Left ventricle myocardium inferior (tissue), 1 donor: ENCODE measurements at regions of chr10 and their contacts with region 1.

Region 1: DNA sequence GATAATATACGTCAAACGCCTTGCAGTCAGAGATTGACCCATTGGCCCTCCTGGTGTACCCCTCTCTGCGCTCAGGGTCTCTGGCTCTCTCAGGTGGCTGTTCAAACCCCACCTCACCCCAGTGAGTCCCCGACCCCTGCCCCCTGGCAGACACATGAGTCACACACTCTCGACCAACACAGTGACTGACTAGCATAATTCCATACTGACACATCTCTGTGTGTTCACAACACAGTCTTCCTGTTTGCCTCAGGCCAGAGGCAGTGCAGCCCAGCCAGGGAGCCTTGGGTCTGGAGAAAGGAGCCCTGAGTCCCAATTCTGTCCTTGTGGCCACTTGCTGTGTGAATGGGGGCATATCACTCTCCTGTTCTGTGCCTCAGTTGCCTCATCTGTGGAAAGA is 40.1 kb downstream of the PALD1 start:
- DNase-seq: no peak
- H3K4me3 ChIP-seq: no peak overlapping the region
- H3K27ac ChIP-seq: no peak overlapping the region
- H3K4me1 ChIP-seq: peaks cover 35% of the 10 kb centered on the region
- H3K27me3 ChIP-seq: no peaks in the 10 kb centered on the region
- CTCF ChIP-seq: no peak

Region 2: DNA sequence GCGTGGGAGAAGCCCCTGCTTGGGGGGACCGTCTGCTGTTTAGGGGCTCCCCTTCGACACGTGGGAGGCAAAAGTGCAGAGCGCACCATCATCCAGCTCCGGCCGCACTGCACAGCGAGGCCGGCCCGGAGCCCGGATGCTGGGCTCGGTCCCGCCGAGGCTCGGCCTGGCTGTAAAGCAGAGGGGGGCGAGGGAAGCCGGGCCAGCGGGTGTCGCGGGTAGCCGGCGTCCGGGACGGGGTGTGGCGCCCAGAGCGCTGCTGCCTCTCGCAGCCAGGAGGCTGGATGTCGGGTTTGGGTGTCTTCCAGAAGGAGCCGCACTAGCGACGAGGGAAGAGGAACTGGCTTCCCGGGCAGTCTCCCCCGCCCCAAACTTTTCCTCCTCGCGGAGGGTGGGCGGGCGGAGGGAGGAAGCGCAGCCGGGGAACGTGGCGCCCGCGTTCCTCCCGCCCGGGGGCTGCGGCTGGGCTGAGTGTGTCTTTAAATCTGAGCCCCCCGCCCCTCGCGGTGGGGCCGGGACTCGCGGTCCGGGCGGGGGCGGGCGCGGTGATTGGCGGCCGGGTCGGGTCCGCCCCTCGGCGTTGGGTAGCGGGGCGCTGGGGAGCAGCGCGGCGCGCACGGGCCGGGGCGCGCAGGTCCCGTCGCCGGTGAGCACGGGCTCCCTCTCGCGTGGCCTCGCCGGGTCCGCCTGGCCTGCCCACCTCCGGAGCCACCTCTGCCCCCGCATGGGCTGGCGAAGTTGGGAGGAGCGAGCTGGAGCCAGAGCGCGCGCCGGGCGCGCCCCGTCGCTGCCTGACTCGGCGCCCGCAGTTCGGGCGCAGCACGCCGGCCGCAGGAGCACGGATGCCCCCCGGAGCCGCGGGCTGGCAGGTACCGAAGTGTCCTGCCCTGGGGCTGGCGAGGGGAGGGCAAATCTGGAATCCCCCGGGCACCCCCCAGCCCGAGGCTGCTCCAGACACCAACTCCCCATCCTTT is 40.2 kb before region 1 on chr10 and contains the start of gene PALD1:
- intact Hi-C with region 1: loop called (anchors 5 kb)
- DNase-seq: peak; percentile 83
- H3K4me3 ChIP-seq: peak within 1 kb of the TSS; percentile 77
- H3K27ac ChIP-seq: peak within 1 kb of the TSS; percentile 88
- H3K4me1 ChIP-seq: peaks cover 76% of the 10 kb centered on the region
- H3K27me3 ChIP-seq: no peaks in the 10 kb centered on the region
- CTCF ChIP-seq: peak; percentile 72
- total RNA-seq, gene PALD1: 5.1 TPM

Region 3: DNA sequence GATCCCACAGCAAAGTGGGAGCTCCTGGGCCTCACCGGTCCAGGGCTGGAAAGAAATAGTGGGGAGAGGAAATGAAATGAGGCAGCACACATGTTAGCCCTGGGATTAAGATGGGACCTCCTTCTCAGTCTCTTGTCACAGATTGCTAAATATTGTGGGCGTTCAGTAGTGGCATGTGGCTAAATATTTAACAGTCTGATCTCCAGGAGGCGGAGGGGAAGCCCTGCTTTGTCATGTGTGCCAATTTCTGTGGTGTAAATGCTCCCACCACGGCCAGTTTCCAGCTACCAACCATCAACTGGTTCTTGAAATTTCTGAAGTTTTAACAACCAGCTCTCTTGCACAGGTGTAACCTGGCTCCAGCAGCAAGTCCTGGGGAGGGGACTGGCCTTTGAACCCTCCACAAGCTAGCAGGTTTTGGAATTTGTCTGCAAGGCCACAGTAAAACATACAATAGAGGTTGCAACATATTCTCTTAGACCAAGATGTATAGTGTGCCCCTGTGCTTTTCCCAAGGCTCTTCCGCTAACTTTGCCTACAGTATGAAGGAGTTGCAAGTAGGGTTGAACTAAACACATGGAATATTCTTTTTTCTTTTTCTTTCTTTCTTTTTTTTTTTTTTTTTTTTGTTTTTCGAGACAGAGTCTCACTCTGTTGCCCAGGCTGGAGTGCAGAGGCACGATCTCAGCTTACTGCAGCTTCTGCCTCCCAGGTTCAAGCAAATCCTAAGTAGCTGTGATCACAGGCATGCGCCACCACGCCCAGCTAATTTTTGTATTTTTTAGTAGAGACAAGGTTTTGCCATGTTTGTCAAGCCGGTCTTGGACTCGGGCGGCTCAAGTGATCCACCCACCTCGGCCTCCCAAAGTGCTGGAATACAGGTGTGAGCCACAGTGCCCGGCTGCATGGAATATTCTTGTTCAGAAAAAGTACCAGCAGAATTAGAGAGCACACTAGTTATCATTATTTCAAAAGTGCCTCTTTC is 472.7 kb after region 1 on chr10:
- intact Hi-C with region 1: no loop called
- DNase-seq: no peak
- H3K4me3 ChIP-seq: no peak overlapping the region
- H3K27ac ChIP-seq: no peak overlapping the region
- H3K4me1 ChIP-seq: no peaks in the 10 kb centered on the region
- H3K27me3 ChIP-seq: peaks cover 17% of the 10 kb centered on the region
- CTCF ChIP-seq: no peak